Lower lobe of right lung (tissue), 2 donors: ENCODE measurements at regions of chr15 and their contacts with region 1.

Region 1: DNA sequence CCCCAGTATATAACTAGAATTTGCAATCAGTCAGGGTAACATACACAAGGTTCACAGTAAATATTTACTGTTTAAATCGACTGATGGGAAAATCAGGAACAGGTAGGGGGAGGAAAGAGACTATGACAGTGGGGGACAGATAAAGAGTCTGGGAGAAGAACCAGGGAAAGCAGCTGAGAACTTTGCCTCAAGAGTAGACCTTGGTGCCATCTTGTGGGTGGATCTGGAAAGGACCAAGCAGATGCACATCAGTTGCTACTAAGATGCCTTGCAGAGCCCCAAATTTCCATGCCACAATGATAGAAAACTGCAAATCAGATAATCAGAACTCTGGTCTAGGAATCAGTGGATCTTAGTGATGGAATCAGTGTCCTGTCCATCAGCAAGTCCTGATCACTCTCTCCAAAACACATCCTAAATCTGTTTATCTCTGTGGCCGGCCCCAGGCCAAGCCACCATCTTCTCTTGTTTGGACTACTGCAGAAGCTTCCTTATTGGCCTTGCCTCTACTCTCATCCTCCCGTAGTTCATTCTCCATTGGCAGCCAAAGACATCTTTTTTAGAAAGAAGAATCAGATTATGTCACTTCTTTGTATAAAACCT is 62.7 kb downstream of the PDE8A start:
- DNase-seq: no peak
- ATAC-seq: peak; percentile 75 to 76
- H3K4me3 ChIP-seq: no peak overlapping the region
- H3K27ac ChIP-seq: no peak overlapping the region
- H3K4me1 ChIP-seq: peaks cover 42% of the 10 kb centered on the region
- H3K27me3 ChIP-seq: no peaks in the 10 kb centered on the region
- CTCF ChIP-seq: peak; percentile 72

Region 2: DNA sequence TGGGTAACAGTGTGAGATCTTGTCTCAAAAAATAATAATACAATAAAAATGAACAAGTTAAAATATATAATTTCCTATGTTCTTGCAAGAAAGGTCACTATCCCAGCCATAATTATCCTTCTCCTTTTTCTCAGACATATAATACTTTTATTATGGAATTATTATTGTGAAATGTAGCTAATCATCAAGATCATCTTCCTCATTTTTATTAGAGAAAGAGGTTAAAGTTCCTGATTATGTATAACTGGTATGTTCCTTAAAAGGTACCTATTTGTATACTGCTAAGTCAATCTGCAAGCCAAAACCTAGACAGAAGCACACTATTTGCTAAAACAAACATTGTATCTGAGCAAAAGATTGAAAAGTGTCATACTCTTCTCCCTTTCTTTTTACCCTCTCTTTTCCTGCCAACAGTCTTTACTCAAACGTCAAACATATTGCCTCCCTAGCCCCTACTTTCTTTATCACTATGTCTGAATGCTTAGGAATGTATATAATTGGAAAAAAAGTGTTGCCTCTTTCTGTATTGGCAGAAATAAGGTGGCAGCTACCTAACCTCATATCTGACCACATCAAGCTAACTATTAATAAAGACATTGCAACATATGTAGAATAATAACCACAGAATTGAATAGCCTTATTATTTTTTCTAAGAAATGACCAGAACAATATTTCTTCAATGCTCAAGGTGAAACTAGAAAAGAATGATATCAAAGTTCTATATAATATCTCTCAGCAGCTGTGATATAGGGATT is 346.9 kb before region 1 on chr15:
- intact Hi-C with region 1: no loop called
- DNase-seq: no peak
- ATAC-seq: peak in 1 of 2 donors; percentile 32
- H3K4me3 ChIP-seq: no peak overlapping the region
- H3K27ac ChIP-seq: no peak overlapping the region
- H3K4me1 ChIP-seq: peaks cover 25% of the 10 kb centered on the region
- H3K27me3 ChIP-seq: no peaks in the 10 kb centered on the region
- CTCF ChIP-seq: no peak

Region 3: GRCh38 chr15:84855136-84855535 is 189.2 kb before region 1 on chr15:
- intact Hi-C with region 1: no loop called
- DNase-seq: no peak
- ATAC-seq: no peak
- H3K4me3 ChIP-seq: no peak overlapping the region
- H3K27ac ChIP-seq: no peak overlapping the region
- H3K4me1 ChIP-seq: no peaks in the 10 kb centered on the region
- H3K27me3 ChIP-seq: no peaks in the 10 kb centered on the region
- CTCF ChIP-seq: no peak

Region 4: GRCh38 chr15:84955089-84955848 is 89.1 kb before region 1 on chr15:
- intact Hi-C with region 1: loop called (anchors 10 kb)
- DNase-seq: peak; percentile 78
- ATAC-seq: peak; percentile 92 to 96
- H3K4me3 ChIP-seq: peak overlapping the region; percentile 35
- H3K27ac ChIP-seq: no peak overlapping the region
- H3K4me1 ChIP-seq: peaks cover 12% of the 10 kb centered on the region
- H3K27me3 ChIP-seq: no peaks in the 10 kb centered on the region
- CTCF ChIP-seq: peak; percentile 91